ENCODE measurements at regions of chr4 and their contacts with region 1.

Region 1: DNA sequence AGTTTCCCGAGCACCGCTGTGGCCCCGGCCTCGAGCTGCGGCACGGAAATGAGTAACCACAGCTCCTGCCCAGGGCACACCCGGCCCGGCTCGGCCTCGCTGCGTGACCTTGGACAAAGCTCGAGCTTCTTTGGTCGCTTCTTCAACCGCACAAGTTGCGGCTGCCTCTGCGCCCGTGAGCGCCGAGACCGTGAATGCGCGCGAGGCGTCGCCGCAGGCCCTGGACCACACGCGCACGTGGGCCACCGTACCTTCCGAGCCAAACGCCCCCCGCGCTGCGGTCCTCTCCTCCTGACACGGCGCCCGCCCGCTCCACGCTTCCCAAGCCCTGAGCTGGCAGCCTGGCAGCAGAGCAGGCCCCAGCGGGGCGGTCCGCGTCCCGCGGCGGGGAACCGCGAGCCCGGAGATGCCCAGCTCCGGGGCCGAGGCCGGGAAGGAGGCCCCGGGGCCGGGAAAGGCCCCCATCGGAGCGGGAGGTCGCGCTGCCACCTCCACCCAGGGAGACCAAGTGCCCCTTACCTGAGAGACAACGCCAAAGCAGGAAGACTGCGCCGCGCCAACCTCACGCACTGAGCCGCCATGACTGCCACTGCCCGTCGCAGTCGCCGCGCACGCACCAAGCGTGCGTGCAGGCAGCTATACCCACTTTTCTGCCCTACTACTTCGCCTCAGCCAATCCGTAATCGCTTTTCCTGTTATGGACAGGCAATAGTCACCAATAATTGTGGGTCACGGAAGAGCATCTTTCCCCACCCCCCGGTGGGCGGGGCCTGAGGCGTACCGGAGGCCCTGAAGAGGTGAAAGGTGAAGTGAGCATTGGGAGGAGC is at the start of gene GRPEL1:
- DNase-seq: peak; percentile 100
- H3K4me3 Mint-ChIP-seq: peak within 1 kb of the TSS; percentile 90
- H3K27ac Mint-ChIP-seq: peak within 1 kb of the TSS; percentile 88
- H3K4me1 Mint-ChIP-seq: peaks cover 54% of the 10 kb centered on the region
- H3K27me3 Mint-ChIP-seq: peaks cover 14% of the 10 kb centered on the region
- total RNA-seq, gene GRPEL1: 39.8 to 40.0 TPM

Region 2: GRCh38 chr4:6688879-6689505 is 378.7 kb before region 1 on chr4:
- CTCF ChIA-PET with region 1: interaction called, 4 read pairs
- POLR2A ChIA-PET with region 1: interaction called, 18 read pairs
- DNase-seq: peak; percentile 91
- H3K4me3 Mint-ChIP-seq: peak overlapping the region; percentile 81
- H3K27ac Mint-ChIP-seq: peak overlapping the region; percentile 97
- H3K4me1 Mint-ChIP-seq: peaks cover 87% of the 10 kb centered on the region
- H3K27me3 Mint-ChIP-seq: no peaks in the 10 kb centered on the region

Region 3: DNA sequence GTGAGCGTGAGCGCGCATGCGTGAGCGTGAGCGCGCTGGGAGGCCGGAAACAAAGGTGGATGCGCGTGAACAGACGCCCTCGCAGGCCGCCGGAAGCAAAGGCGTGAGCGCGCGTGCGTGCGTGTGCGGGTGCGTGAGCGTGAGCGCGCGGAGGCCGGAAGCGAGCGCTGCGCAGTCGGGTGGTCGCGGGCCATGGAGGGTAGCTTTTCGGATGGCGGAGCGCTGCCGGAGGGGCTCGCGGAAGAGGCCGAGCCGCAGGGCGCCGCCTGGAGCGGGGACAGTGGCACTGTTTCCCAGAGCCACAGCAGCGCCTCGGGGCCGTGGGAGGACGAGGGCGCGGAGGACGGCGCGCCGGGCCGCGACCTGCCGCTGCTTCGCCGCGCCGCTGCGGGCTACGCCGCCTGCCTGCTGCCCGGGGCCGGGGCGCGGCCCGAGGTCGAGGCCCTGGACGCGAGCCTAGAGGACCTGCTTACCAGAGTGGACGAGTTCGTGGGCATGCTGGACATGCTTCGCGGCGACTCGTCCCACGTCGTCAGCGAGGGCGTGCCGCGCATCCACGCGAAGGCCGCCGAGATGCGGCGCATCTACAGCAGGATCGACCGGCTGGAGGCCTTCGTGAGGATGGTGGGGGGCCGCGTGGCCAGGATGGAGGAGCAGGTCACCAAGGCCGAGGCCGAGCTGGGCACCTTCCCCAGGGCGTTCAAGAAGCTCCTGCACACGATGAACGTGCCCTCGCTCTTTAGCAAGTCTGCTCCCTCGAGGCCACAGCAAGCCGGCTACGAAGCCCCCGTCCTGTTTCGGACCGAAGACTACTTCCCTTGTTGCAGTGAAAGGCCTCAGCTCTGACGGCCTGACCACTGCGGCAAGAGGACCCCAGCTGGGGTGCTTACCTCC is 351.4 kb before region 1 on chr4 and contains the start of gene BLOC1S4:
- CTCF ChIA-PET with region 1: interaction called, 48 read pairs
- POLR2A ChIA-PET with region 1: interaction called, 19 read pairs
- DNase-seq: peak; percentile 91
- H3K4me3 Mint-ChIP-seq: peak within 1 kb of the TSS; percentile 88
- H3K27ac Mint-ChIP-seq: peak within 1 kb of the TSS; percentile 87
- H3K4me1 Mint-ChIP-seq: peaks cover 36% of the 10 kb centered on the region
- H3K27me3 Mint-ChIP-seq: no peaks in the 10 kb centered on the region
- total RNA-seq, gene BLOC1S4: 22.9 to 23.2 TPM

Region 4: GRCh38 chr4:6926681-6927478 is 140.8 kb before region 1 on chr4:
- CTCF ChIA-PET with region 1: interaction called, 10 read pairs
- POLR2A ChIA-PET with region 1: interaction called, 4 read pairs
- DNase-seq: peak; percentile 76
- H3K4me3 Mint-ChIP-seq: peak overlapping the region; percentile 53
- H3K27ac Mint-ChIP-seq: peak overlapping the region; percentile 70
- H3K4me1 Mint-ChIP-seq: peaks cover 62% of the 10 kb centered on the region
- H3K27me3 Mint-ChIP-seq: no peaks in the 10 kb centered on the region

Region 5: GRCh38 chr4:6999172-7000055 is 68.3 kb before region 1 on chr4:
- CTCF ChIA-PET with region 1: interaction called, 11 read pairs
- POLR2A ChIA-PET with region 1: interaction called, 49 read pairs
- DNase-seq: peak; percentile 79
- H3K4me3 Mint-ChIP-seq: peak overlapping the region; percentile 41
- H3K27ac Mint-ChIP-seq: peak overlapping the region; percentile 95
- H3K4me1 Mint-ChIP-seq: peaks cover 44% of the 10 kb centered on the region
- H3K27me3 Mint-ChIP-seq: no peaks in the 10 kb centered on the region

Region 6: DNA sequence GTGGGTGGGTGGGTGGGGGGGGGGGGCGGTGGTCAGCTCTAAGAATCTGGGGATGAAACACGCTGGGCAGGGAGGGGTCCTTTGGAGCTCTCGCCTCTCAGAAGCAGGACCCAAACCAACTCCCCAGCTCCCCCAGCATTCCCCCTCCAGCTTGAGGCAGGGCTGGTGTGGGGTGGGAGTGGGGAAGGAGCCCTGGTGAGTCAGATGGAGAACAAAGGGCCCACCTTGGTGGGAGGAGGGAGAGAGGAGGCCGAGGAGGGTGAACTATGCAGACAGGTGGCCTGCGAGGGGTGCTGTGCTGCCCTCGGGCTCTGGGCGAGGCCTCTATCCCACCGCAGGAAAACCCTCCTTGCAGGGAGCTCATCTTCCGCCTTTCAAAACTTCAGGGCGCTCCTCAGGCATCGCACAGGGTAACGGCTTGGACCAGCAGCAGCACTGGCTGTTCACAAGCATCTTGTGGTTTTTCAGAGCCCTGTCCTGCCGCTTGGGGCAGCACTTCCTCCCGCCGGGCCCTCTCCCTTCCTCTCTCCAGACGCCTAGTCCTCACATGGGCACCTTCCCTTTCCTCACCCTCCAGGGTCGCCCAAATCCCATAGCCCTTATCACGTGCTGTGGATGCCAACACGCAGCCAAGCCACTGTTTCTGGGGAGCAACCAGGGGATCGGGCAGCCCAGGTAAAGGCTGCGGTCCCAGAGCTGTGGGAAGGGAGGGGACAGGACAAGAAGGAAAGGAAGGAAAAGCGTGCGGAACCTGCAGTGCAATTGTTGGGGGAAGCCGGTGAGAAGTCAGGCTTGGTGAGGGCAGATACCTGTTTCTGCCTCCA is 34.2 kb after region 1 on chr4:
- CTCF ChIA-PET with region 1: interaction called, 3 read pairs
- POLR2A ChIA-PET with region 1: interaction called, 11 read pairs
- DNase-seq: peak; percentile 67
- H3K4me3 Mint-ChIP-seq: peak overlapping the region; percentile 81
- H3K27ac Mint-ChIP-seq: no peak overlapping the region
- H3K4me1 Mint-ChIP-seq: peaks cover 19% of the 10 kb centered on the region
- H3K27me3 Mint-ChIP-seq: peaks cover 18% of the 10 kb centered on the region